ENCODE measurements at regions of chr11 and their contacts with region 1.

Region 1: GRCh38 chr11:85089654-85090053 is 537.5 kb downstream of the DLG2 start:
- DNase-seq: no peak
- H3K4me3 ChIP-seq: no peak overlapping the region
- CTCF ChIP-seq: no peak
- POLR2A ChIP-seq: no peak

Region 2: GRCh38 chr11:83666149-83666548 is 1423.5 kb before region 1 on chr11:
- intact Hi-C with region 1: loop called (anchors 5 kb)
- DNase-seq: no peak
- H3K4me3 ChIP-seq: no peak overlapping the region
- CTCF ChIP-seq: no peak
- POLR2A ChIP-seq: no peak